ENCODE measurements at regions of chr10 and their contacts with region 1.

Region 1: GRCh38 chr10:34802692-34803091 is 12.4 kb downstream of the PARD3 start:
- DNase-seq: no peak
- ATAC-seq: no peak
- H3K4me3 ChIP-seq: no peak overlapping the region
- H3K27ac ChIP-seq: peak overlapping the region; percentile 0
- H3K4me1 ChIP-seq: peaks cover 29% of the 10 kb centered on the region
- H3K27me3 ChIP-seq: no peaks in the 10 kb centered on the region
- CTCF ChIP-seq: no peak

Region 2: GRCh38 chr10:34607894-34608293 is 194.8 kb before region 1 on chr10:
- intact Hi-C with region 1: no loop called
- DNase-seq: no peak
- ATAC-seq: no peak
- H3K4me3 ChIP-seq: no peak overlapping the region
- H3K27ac ChIP-seq: no peak overlapping the region
- H3K4me1 ChIP-seq: peaks cover under 1% of the 10 kb centered on the region
- H3K27me3 ChIP-seq: no peaks in the 10 kb centered on the region
- CTCF ChIP-seq: no peak

Region 3: GRCh38 chr10:34628174-34628796 is 174.4 kb before region 1 on chr10:
- intact Hi-C with region 1: no loop called
- DNase-seq: peak; percentile 52 to 67
- ATAC-seq: peak; percentile 78 to 85 (median 82)
- H3K4me3 ChIP-seq: no peak overlapping the region
- H3K27ac ChIP-seq: no peak overlapping the region
- H3K4me1 ChIP-seq: peaks cover 8% of the 10 kb centered on the region
- H3K27me3 ChIP-seq: no peaks in the 10 kb centered on the region
- CTCF ChIP-seq: no peak

Region 4: DNA sequence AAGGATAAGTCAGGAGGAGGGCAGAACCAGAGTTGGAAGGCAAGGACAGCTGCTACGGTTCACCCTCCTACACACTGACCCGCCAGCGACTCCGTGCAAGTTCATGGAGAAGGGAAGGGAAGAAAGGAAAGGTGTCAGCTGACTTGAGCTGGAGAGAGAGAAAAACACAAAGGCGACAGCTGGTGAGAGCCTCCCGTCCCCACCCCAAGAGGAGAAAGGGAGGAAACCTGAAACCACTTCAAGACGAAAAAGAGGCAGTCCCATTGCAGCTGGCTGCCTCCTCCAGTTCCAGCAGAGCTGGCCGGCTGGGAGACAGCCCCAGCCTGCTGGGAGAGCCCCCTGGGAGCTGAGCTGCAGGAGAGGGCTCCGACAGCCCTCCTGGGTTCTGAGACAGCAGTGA is 62.8 kb before region 1 on chr10:
- intact Hi-C with region 1: loop called in 1 of 2 experiments (anchors 1 kb)
- DNase-seq: peak; percentile 43 to 79
- ATAC-seq: peak; percentile 83 to 87 (median 86)
- H3K4me3 ChIP-seq: peak overlapping the region; percentile 35
- H3K27ac ChIP-seq: peak overlapping the region; percentile 80
- H3K4me1 ChIP-seq: peaks cover 44% of the 10 kb centered on the region
- H3K27me3 ChIP-seq: no peaks in the 10 kb centered on the region
- CTCF ChIP-seq: no peak